Caco-2 (cell line): ENCODE measurements at regions of chr4 and their contacts with region 1.

Region 1: GRCh38 chr4:135497563-135498152 is 1296.1 kb upstream of the PABPC4L start:
- DNase-seq: no peak
- H3K4me3 ChIP-seq: no peak overlapping the region
- H3K4me3 Mint-ChIP-seq: no peak overlapping the region
- H3K27ac Mint-ChIP-seq: no peak overlapping the region
- H3K4me1 ChIP-seq: no peaks in the 10 kb centered on the region
- H3K4me1 Mint-ChIP-seq: no peaks in the 10 kb centered on the region
- H3K27me3 ChIP-seq: no peaks in the 10 kb centered on the region
- H3K27me3 Mint-ChIP-seq: no peaks in the 10 kb centered on the region
- CTCF ChIP-seq: no peak

Region 2: DNA sequence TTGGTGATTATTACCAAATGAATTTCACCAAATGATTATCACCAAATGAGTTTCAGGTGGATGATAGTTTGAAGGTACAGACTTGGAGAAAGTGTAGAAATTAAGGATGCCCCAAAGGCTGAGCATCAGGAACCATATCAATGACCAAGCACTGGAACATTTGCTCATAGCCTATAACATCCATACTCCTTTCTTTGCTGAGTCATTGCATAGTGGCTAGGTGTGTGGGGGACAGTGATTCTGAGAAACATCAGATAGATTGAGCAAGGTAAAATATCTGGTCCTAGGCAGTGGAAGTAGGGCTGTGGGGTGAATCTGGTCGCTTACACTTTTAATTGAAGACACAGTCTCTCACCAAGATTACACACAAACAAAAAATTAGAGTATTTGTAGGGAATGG is 66.4 kb after region 1 on chr4:
- CTCF ChIA-PET with region 1: no interaction called
- POLR2A ChIA-PET with region 1: no interaction called
- intact Hi-C with region 1: loop called (anchors 2 kb)
- DNase-seq: no peak
- H3K4me3 ChIP-seq: no peak overlapping the region
- H3K4me3 Mint-ChIP-seq: no peak overlapping the region
- H3K27ac Mint-ChIP-seq: no peak overlapping the region
- H3K4me1 ChIP-seq: no peaks in the 10 kb centered on the region
- H3K4me1 Mint-ChIP-seq: no peaks in the 10 kb centered on the region
- H3K27me3 ChIP-seq: no peaks in the 10 kb centered on the region
- H3K27me3 Mint-ChIP-seq: no peaks in the 10 kb centered on the region
- CTCF ChIP-seq: no peak